Activated CD4-positive, alpha-beta T cell treated with anti-CD3 and anti-CD28 coated beads, Interleukin-2, amount 10 ng/mL, durations not matched to agents 24 days and 14 days (primary cell): ENCODE measurements at regions of chr19 and their contacts with region 1.

Region 1: DNA sequence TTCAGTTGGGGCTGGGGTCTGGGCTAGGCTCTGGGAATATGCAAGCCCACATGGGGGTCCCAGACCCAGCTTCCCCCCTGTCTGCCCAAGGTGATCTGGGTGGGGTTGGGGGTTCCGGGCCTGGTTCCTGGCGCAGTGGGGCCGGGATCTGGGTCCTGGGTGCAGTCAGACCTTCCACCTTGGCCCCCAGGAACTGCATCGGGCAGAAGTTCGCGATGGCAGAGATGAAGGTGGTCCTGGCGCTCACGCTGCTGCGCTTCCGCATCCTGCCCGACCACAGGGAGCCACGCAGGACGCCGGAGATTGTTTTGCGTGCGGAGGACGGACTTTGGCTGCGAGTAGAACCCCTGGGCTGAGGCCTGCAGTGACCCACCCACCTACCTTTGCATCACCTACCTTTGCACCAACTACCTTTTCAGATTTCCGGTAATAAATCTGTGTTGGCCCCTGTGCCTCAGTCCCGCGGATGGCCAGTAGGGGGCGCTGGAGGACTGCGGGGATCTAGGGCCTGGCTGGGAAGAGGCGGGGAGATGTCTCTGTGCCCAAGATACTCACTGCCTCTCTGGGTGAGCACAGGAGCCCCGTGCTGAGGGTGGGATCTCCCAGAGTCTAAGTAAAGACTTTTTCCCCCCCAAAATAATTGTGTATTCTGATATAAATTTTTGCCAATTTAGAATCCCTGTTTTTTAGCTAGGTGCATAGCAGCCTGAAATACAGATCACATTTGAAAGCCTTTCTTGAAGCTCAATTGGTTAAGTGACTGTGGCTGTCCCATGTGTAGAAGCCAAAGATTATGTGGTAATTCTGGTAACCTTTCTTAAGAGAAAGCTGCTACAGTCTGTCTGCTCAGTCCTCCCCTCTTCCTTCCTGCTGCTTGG is 11.5 kb upstream of the CYP4F3 start:
- DNase-seq: peak; percentile 96
- H3K4me3 Mint-ChIP-seq: no peak overlapping the region
- H3K27ac Mint-ChIP-seq: no peak overlapping the region
- H3K4me1 Mint-ChIP-seq: no peaks in the 10 kb centered on the region
- H3K27me3 Mint-ChIP-seq: peaks cover 10% of the 10 kb centered on the region

Region 2: DNA sequence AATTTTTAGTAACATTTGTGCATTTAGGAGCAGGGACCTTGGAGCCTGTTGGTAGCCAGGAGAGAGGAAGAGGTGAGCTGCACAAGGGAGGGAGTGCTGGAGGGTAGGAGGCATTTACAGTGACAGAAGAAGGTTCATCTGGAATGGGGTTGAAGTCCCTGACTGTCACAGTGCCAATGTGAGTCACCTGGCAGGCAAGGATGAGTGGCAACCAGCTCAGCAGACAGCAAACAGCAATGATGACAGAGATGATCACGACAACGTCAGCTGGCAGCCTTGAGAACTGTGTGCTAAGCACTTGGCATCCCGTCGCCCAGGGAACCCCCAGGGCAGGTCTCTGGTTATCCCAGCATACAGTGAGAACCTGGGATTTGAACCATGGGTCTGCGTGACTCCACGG is 160.9 kb after region 1 on chr19:
- intact Hi-C with region 1: no loop called
- DNase-seq: no peak
- H3K4me3 Mint-ChIP-seq: no peak overlapping the region
- H3K27ac Mint-ChIP-seq: no peak overlapping the region
- H3K4me1 Mint-ChIP-seq: no peaks in the 10 kb centered on the region
- H3K27me3 Mint-ChIP-seq: no peaks in the 10 kb centered on the region

Region 3: GRCh38 chr19:15869109-15869555 is 239.9 kb after region 1 on chr19:
- intact Hi-C with region 1: loop called (anchors 1 kb)
- DNase-seq: peak; percentile 76
- H3K4me3 Mint-ChIP-seq: no peak overlapping the region
- H3K27ac Mint-ChIP-seq: peak overlapping the region; percentile 1
- H3K4me1 Mint-ChIP-seq: peaks cover 8% of the 10 kb centered on the region
- H3K27me3 Mint-ChIP-seq: peaks cover 12% of the 10 kb centered on the region

Region 4: GRCh38 chr19:16041299-16041990 is 412.2 kb after region 1 on chr19:
- intact Hi-C with region 1: loop called (anchors 10 kb)
- DNase-seq: peak; percentile 94
- H3K4me3 Mint-ChIP-seq: peak overlapping the region; percentile 62
- H3K27ac Mint-ChIP-seq: no peak overlapping the region
- H3K4me1 Mint-ChIP-seq: peaks cover 7% of the 10 kb centered on the region
- H3K27me3 Mint-ChIP-seq: peaks cover 13% of the 10 kb centered on the region